Cardiac septum (tissue), 1 donor: ENCODE measurements at regions of chr2 and their contacts with region 1.

Region 1: GRCh38 chr2:28356095-28356911 is 36.4 kb upstream of the FOSL2 start:
- DNase-seq: peak; percentile 91

Region 2: GRCh38 chr2:28338046-28338817 is 18.1 kb before region 1 on chr2:
- intact Hi-C with region 1: loop called (anchors 1 kb)
- DNase-seq: no peak

Region 3: GRCh38 chr2:28387082-28387960 is 31.0 kb after region 1 on chr2:
- intact Hi-C with region 1: loop called (anchors 2 kb)
- DNase-seq: no peak

Region 4: GRCh38 chr2:28488858-28489575 is 132.7 kb after region 1 on chr2:
- intact Hi-C with region 1: no loop called
- DNase-seq: no peak

Region 5: GRCh38 chr2:28855193-28855592 is 498.9 kb after region 1 on chr2:
- intact Hi-C with region 1: no loop called
- DNase-seq: no peak